HEK293 (cell line): ENCODE measurements at regions of chr19 and their contacts with region 1.

Region 1: DNA sequence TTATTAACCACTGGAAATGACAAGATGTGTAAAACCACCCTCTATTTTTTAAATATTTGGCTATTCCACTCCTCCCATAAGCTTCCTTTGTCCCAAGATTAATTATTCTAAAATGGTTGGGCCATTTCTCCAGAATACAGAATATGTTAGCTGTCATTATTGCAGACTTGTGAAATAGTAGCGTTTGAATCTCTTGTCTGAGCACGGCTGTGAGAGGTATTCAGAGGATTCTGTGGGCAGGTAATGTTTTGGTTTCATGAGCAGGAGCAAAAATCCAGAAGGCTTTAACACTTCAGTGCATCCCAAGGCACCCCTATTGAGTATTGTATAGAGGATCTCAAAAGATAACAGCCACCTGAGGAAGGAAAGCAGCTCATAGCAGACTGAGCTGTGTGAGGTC is 256.0 kb downstream of the UQCRFS1 start:
- H3K4me3 ChIP-seq: no peak overlapping the region
- H3K27ac ChIP-seq: no peak overlapping the region
- H3K4me1 ChIP-seq: no peaks in the 10 kb centered on the region
- CTCF ChIP-seq: no peak

Region 2: DNA sequence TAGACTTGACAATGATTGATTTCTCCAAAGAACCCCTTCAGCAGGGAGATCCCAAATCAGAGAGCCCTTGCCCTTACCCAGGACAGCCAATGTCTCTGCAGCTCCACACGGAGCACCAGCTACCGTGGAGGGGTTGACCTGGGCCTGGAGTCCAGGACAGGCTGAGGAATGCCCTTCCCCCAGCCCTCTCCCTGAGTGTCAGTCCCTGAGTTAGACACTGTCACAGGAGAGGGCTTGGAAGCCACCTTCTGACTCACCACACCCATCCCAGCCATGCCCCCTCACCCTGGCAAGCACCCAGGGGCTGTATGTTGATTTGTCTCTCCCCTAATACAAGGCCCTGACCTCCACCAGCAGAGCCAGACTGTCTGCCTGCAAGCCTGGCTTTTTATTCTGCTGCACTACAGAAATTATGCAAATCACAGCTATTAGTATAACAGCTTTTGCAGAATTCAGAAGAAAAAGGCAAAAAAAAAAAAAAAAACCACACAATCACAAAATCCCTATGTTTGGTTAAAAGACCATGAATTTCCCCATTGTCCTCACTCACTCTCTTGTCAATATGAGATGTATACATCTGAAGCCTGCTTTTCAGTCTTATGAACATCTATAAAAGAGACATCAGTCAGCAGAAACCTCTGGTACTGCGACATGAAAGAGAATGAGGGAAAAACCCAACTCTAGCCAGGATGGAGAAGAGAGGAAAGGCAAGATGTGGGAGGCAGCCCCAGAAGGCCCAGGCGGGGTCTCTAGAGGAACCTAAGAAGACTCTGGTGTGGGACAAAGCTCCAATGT is 15.3 kb after region 1 on chr19:
- CTCF ChIA-PET with region 1: interaction called, 10 read pairs
- POLR2A ChIA-PET with region 1: no interaction called
- H3K4me3 ChIP-seq: no peak overlapping the region
- H3K27ac ChIP-seq: no peak overlapping the region
- H3K4me1 ChIP-seq: peaks cover 18% of the 10 kb centered on the region
- CTCF ChIP-seq: no peak

Region 3: GRCh38 chr19:29121684-29122083 is 164.7 kb after region 1 on chr19:
- CTCF ChIA-PET with region 1: no interaction called
- POLR2A ChIA-PET with region 1: no interaction called
- H3K4me3 ChIP-seq: no peak overlapping the region
- H3K27ac ChIP-seq: no peak overlapping the region
- H3K4me1 ChIP-seq: peaks cover 3% of the 10 kb centered on the region; the same call in 1 of the 2 replicates
- CTCF ChIP-seq: no peak